H1 (cell line): ENCODE measurements at regions of chr3 and their contacts with region 1.

Region 1: GRCh38 chr3:113287803-113288648 is 76.7 kb downstream of the BOC start:
- DNase-seq: peak in 1 of 2 experiments; percentile 83
- H3K4me3 ChIP-seq: no peak overlapping the region
- H3K27ac ChIP-seq: no peak overlapping the region
- H3K4me1 ChIP-seq: 0 out of 7 replicates have a peak, but pooled peaks cover 0 to 2% (median 0%) of the 10 kb centered on the region in 4 experiments
- H3K27me3 ChIP-seq: no peaks in the 10 kb centered on the region
- CTCF ChIP-seq: peak in 2 of 3 experiments; percentile 92 to 95; a peak in 3 of 4 replicates
- EP300 ChIP-seq: no peak
- POLR2A ChIP-seq: no peak
- RAD21 ChIP-seq: peak; percentile 98 to 99

Region 2: GRCh38 chr3:113051302-113051711 is 236.7 kb before region 1 on chr3:
- CTCF ChIA-PET with region 1: interaction called, 108 read pairs
- POLR2A ChIA-PET with region 1: no interaction called
- DNase-seq: peak; percentile 38 to 95
- H3K4me3 ChIP-seq: no peak overlapping the region
- H3K27ac ChIP-seq: no peak overlapping the region
- H3K4me1 ChIP-seq: no peaks in the 10 kb centered on the region
- H3K27me3 ChIP-seq: peaks cover 0 to 3% (median 1%) of the 10 kb centered on the region in 4 experiments; a peak in 1 of 7 replicates
- CTCF ChIP-seq: peak; percentile 48 to 91 (median 80)
- EP300 ChIP-seq: no peak
- POLR2A ChIP-seq: no peak
- RAD21 ChIP-seq: peak; percentile 95 to 99

Region 3: DNA sequence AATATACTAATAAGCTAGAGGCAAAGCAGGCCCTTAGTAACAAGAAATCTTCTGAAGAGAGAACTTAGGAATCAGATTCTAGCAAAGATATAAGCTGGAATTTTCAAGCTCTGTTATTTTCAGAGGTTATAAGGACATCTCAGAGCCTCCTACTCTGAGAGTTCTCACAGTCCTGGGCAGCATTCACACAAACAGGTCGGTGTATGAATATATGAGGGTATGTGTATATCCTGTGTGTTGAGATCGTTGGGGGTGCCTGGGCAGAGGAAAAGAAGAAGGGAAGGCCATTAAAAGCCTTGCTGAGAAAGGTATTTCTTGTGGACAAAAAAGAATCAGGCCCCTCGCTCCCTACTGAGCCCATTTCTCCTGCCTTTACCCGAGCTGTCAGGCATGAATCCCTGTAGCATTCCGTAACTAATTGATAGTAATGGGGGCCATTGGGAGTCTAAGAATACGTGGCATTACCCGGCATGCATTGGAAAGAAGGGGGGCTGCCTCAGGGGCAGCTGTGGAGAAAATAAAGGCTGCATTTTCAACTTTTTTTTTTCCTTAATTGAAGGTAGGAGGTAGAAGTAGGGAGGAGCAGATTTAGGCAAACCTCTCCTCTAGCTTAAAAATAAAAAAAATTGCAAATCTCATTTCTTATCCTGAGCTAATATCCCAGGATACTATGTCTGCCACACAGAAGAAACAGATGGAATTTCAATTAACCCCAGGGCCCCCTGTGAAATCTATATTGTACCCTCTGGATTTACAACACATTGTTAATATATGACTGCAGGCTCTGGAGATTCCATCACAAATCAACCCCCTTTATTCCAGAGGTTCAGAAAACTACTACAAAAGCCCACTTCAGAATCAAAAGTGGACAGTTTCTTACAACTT is 193.4 kb before region 1 on chr3:
- CTCF ChIA-PET with region 1: interaction called, 11 read pairs
- POLR2A ChIA-PET with region 1: no interaction called
- DNase-seq: no peak
- H3K4me3 ChIP-seq: no peak overlapping the region
- H3K27ac ChIP-seq: 0 out of 2 replicates have a peak overlapping the region, but pooled peaks have one; percentile 36
- H3K4me1 ChIP-seq: peaks cover 0 to 11% (median 2%) of the 10 kb centered on the region in 4 experiments; a peak in 3 of 7 replicates
- H3K27me3 ChIP-seq: no peaks in the 10 kb centered on the region
- CTCF ChIP-seq: no peak
- EP300 ChIP-seq: no peak
- POLR2A ChIP-seq: no peak
- RAD21 ChIP-seq: no peak

Region 4: DNA sequence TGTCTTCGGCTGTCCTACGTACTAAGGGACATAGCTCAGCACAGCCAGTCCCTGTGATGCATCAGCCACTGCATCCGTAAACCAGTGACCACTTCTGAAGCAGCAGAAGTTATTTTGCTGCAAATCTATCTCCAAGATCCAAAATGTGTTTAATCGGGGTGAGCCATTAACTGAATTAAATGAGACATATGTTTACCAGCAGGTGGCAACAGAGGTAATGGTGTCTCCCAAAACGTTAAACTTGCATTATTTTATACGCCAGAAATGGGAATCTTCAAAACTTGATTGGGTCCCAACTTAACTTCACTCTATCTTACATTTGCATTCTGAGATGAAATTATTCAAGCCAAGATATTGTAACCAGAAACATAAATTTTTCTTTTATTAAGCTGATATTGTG is 152.0 kb before region 1 on chr3:
- CTCF ChIA-PET with region 1: interaction called, 65 read pairs
- POLR2A ChIA-PET with region 1: no interaction called
- DNase-seq: no peak
- H3K4me3 ChIP-seq: no peak overlapping the region; a peak in 1 of 8 replicates
- H3K27ac ChIP-seq: no peak overlapping the region
- H3K4me1 ChIP-seq: peaks cover 0 to 4% (median 1%) of the 10 kb centered on the region in 4 experiments; a peak in 3 of 7 replicates
- H3K27me3 ChIP-seq: no peaks in the 10 kb centered on the region
- CTCF ChIP-seq: peak in 2 of 3 experiments; percentile 36 to 49; a peak in 2 of 4 replicates
- EP300 ChIP-seq: no peak
- POLR2A ChIP-seq: no peak
- RAD21 ChIP-seq: peak; percentile 44 to 64

Region 5: DNA sequence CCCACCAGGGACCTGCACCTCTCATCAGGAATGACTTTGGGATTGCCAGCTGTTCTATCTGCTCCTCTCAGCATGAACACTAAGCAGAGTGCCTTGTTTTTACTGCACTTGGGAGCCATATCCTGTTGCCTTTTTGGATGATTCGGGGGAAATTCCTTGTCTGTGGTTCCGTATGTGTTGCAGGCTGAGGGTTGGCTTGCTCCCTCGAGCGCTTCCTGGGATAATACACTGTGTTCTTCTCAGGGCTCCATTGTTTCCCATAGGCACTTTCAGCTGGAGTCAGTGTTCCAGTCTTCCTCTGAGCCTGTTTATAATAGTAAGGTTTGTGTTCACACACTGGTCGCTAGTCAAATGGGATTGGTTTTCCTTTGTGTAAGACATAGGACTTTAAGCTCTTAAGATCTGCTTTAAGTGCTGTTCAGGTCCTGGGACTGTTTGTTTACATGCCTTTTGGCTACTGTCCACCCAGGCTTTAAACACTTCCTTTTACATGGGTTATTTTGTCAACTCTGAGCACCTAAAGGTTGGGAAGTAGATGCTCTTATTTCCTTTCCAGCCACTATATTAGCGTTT is 53.3 kb before region 1 on chr3:
- CTCF ChIA-PET with region 1: interaction called, 21 read pairs
- POLR2A ChIA-PET with region 1: no interaction called
- DNase-seq: no peak
- H3K4me3 ChIP-seq: no peak overlapping the region
- H3K27ac ChIP-seq: no peak overlapping the region; the same call in 1 of the 2 replicates
- H3K4me1 ChIP-seq: peaks cover 0 to 7% (median 4%) of the 10 kb centered on the region in 4 experiments; a peak in 6 of 7 replicates
- H3K27me3 ChIP-seq: no peaks in the 10 kb centered on the region
- CTCF ChIP-seq: no peak
- EP300 ChIP-seq: no peak
- POLR2A ChIP-seq: no peak
- RAD21 ChIP-seq: no peak

Region 6: DNA sequence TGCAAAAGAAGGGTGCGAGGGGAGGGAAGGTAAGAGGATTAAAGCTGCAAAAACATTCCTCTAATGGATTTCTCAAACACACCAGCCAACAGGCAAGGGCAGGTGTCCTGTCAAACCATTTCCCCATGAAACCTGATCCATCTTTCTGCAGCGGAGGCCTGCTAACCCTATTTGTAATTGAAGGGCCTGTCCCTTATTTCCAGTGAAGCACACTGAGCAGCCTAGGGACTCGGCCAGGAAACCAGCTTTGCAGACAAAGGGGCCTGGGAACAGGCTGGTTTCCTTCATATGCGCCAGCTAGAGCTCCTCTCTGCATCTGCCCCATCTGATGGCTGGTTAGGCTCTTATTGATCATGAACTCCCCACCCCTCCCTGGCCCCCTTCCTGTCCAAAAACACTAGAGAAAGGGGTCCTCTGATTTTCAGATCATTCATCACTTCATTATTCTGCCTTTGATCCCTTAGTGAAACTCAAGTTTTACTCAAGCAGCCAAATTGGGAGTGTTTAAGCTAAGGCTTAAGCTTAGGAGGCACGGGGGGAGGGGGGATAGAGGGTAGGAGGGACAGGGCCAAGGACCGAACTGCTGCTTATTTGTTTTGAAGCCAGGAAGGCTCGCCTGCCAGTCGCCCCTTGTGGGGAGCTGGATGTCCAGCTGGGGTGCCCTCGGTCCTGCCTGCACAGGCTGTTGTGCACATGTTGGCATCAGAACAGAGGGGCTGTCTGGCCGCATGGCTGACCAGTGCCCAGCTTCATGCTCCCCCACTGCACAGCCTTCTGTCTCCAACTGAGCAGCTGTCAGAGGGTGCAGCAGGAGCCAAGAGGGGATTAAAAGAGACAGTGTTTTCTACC is 23.5 kb before region 1 on chr3:
- CTCF ChIA-PET with region 1: interaction called, 37 read pairs
- POLR2A ChIA-PET with region 1: no interaction called
- DNase-seq: peak; percentile 36 to 59
- H3K4me3 ChIP-seq: peak overlapping the region in 3 of 4 experiments; percentile 7 to 28 (median 8); a peak in 3 of 8 replicates
- H3K27ac ChIP-seq: peak overlapping the region; percentile 44; the same call in 1 of the 2 replicates
- H3K4me1 ChIP-seq: peaks cover 7 to 29% (median 21%) of the 10 kb centered on the region in 4 experiments
- H3K27me3 ChIP-seq: 0 out of 7 replicates have a peak, but pooled peaks cover 0 to 1% (median 0%) of the 10 kb centered on the region in 4 experiments
- CTCF ChIP-seq: no peak
- EP300 ChIP-seq: no peak
- POLR2A ChIP-seq: no peak
- RAD21 ChIP-seq: no peak

Region 7: GRCh38 chr3:113314923-113315322 is 26.9 kb after region 1 on chr3:
- CTCF ChIA-PET with region 1: no interaction called
- POLR2A ChIA-PET with region 1: no interaction called
- DNase-seq: no peak
- H3K4me3 ChIP-seq: no peak overlapping the region
- H3K27ac ChIP-seq: no peak overlapping the region
- H3K4me1 ChIP-seq: no peaks in the 10 kb centered on the region
- H3K27me3 ChIP-seq: no peaks in the 10 kb centered on the region
- CTCF ChIP-seq: no peak
- EP300 ChIP-seq: no peak
- POLR2A ChIP-seq: no peak
- RAD21 ChIP-seq: no peak